Activated CD4-positive, alpha-beta memory T cell treated with anti-CD3 and anti-CD28 coated beads for 36 hours (primary cell): ENCODE measurements at regions of chr18 and their contacts with region 1.

Region 1: GRCh38 chr18:9838144-9838877 is 47.5 kb upstream of the TXNDC2 start:
- DNase-seq: no peak
- H3K4me3 Mint-ChIP-seq: no peak overlapping the region
- H3K27ac Mint-ChIP-seq: no peak overlapping the region
- H3K4me1 Mint-ChIP-seq: no peaks in the 10 kb centered on the region
- H3K27me3 Mint-ChIP-seq: peaks cover 17% of the 10 kb centered on the region

Region 2: DNA sequence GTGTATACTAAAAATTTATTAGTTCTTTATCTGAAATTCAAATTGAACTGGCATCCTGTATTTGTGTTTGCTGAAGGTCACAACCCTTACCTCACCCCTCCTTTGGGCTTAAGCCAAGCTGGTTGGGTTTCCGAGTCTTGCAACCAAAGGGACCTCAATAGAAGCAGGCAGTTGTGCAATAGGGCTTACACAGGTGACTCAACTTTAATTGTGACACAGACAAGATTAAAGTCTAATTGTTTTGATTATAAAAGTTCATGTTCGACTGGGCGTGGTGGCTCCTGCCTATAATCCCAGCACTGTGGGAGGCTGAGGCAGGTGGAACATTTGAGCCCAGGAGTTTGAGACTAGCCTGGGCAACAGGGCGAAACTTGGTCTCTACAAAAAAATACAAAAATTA is 58.7 kb before region 1 on chr18:
- CTCF ChIA-PET with region 1: no interaction called
- POLR2A ChIA-PET with region 1: no interaction called
- intact Hi-C with region 1: no loop called
- DNase-seq: no peak
- H3K4me3 Mint-ChIP-seq: no peak overlapping the region
- H3K27ac Mint-ChIP-seq: no peak overlapping the region
- H3K4me1 Mint-ChIP-seq: no peaks in the 10 kb centered on the region
- H3K27me3 Mint-ChIP-seq: peaks cover 8% of the 10 kb centered on the region

Region 3: GRCh38 chr18:10051877-10052631 is 213.7 kb after region 1 on chr18:
- CTCF ChIA-PET with region 1: no interaction called
- POLR2A ChIA-PET with region 1: no interaction called
- intact Hi-C with region 1: loop called (anchors 5 kb)
- DNase-seq: no peak
- H3K4me3 Mint-ChIP-seq: no peak overlapping the region
- H3K27ac Mint-ChIP-seq: no peak overlapping the region
- H3K4me1 Mint-ChIP-seq: no peaks in the 10 kb centered on the region
- H3K27me3 Mint-ChIP-seq: peaks cover 5% of the 10 kb centered on the region

Region 4: DNA sequence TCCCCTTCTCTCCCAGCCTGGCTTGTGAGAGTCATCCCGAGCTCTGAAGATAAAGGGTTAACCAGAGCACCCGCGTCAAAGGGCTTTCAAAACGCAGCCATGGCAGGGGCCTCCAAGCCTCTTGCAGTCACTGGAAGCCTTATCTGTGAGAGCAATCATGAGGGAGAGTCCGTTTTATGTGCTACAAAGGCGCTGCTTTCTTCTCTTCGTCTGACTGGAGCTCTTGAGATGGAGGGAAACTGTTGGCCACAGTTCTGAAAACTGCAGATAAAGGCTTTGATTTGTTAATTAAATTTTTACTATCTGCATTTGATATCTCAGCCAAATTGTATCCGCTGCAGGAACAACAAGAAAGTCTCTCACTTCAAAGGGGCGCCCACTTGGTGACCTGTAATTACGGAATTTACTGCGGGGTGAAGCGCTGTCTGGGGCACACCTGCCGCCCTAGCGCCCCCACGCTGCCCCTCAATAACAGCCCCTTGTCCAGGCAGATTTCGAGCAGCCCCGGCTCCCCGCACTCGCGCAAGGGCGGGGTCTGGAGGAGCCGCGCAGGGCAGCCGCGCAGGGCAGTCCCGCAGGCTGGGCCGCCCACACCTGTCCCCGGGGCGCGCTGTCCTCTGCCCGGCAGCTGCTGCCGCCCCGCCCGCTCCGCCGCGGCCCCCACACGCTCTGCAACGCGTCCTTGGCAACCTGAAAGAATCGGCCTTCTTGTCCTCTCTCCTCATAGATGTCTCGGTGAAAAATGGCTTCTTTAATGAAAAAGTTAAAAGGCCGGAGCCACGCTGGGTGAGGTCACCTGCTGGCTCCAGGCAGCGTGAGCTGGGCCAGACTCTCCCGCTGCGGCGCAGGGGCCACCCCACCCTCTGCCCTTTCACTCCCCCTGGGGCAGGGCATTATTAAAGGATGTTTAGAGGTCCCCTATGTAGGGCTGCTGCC is 293.4 kb after region 1 on chr18:
- CTCF ChIA-PET with region 1: no interaction called
- POLR2A ChIA-PET with region 1: no interaction called
- intact Hi-C with region 1: no loop called
- DNase-seq: no peak
- H3K4me3 Mint-ChIP-seq: no peak overlapping the region
- H3K27ac Mint-ChIP-seq: no peak overlapping the region
- H3K4me1 Mint-ChIP-seq: no peaks in the 10 kb centered on the region
- H3K27me3 Mint-ChIP-seq: peaks cover 24% of the 10 kb centered on the region